ENCODE measurements at regions of chr17 and their contacts with region 1.

Region 1: GRCh38 chr17:62866471-62866870 is 58.4 kb upstream of the MARCHF10 start:
- DNase-seq: no peak
- ATAC-seq: no peak
- H3K4me3 ChIP-seq: no peak overlapping the region
- H3K27ac ChIP-seq: no peak overlapping the region
- H3K4me1 ChIP-seq: no peaks in the 10 kb centered on the region
- CTCF ChIP-seq: no peak
- EP300 ChIP-seq: no peak
- POLR2A ChIP-seq: no peak
- RAD21 ChIP-seq: no peak

Region 2: GRCh38 chr17:62343764-62344270 is 522.7 kb before region 1 on chr17:
- CTCF ChIA-PET with region 1: no interaction called
- POLR2A ChIA-PET with region 1: no interaction called
- DNase-seq: no peak
- ATAC-seq: no peak
- H3K4me3 ChIP-seq: no peak overlapping the region
- H3K27ac ChIP-seq: no peak overlapping the region
- H3K4me1 ChIP-seq: no peaks in the 10 kb centered on the region
- CTCF ChIP-seq: no peak
- EP300 ChIP-seq: no peak
- POLR2A ChIP-seq: no peak
- RAD21 ChIP-seq: no peak

Region 3: GRCh38 chr17:62876673-62877401 is 10.4 kb after region 1 on chr17:
- CTCF ChIA-PET with region 1: interaction called, 10 read pairs
- POLR2A ChIA-PET with region 1: no interaction called
- DNase-seq: no peak
- ATAC-seq: peak in 1 of 2 experiments; percentile 47; a peak in 3 of 6 replicates
- H3K4me3 ChIP-seq: no peak overlapping the region
- H3K27ac ChIP-seq: peak overlapping the region; percentile 48 to 62
- H3K4me1 ChIP-seq: peaks cover 21% of the 10 kb centered on the region
- CTCF ChIP-seq: no peak
- EP300 ChIP-seq: no peak
- POLR2A ChIP-seq: no peak
- RAD21 ChIP-seq: no peak

Measured in A549 (cell line).